ENCODE measurements at regions of chr17 and their contacts with region 1.

Region 1: DNA sequence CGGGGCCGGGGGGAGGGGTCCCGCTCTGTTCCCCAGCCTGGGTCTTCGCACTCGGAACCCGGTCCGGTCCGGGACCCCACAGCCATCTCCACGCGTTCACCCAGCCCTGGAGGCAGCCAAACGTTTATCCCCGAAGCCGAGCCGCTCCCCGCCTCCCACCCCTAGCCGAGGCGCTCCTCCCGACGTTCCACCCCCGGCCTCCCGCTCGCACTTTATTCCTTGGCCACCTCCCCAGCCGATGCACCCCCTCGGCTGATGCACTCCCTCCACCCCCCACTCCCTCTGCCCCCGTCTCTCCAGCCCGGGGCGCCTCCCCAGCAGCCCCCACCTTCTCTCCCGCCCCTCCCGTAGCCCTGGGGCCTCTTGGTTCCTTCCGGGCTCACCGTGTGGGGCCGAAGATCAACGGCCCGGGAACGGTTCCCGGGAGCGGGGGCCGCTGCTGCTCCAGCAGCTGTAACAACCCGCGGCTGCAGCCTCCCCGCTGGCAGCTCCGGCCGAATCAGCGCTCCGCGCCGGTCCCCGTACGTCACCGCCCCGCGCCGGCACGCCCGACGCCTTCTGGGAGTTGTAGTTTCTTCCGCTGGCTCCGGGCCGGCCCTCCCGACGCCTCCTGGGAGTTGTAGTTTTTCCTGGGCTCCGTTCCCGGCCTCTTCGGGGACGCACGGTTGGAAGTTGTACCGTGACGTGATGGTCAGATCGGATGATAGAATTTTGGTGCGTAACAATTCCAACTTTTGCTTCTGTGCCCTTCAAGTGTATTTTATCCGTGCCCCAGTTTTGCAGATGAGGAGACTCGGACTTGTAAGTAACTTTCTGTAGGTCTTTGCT is at the starts of genes LRRC3C and ORMDL3:
- DNase-seq: peak; percentile 87 to 93
- ATAC-seq: peak; percentile 85 to 90
- H3K4me3 ChIP-seq: peak within 1 kb of the TSS; percentile 79
- H3K27ac ChIP-seq: peak within 1 kb of the TSS; percentile 79 to 93
- H3K4me1 ChIP-seq: peaks cover 41% of the 10 kb centered on the region
- CTCF ChIP-seq: no peak
- EP300 ChIP-seq: no peak
- POLR2A ChIP-seq: peak; percentile 80
- RAD21 ChIP-seq: no peak
- polyA plus RNA-seq, gene LRRC3C: not detected in 2 replicates
- polyA plus RNA-seq, gene ORMDL3: 26.9 and 49.0 TPM in 2 replicates

Region 2: GRCh38 chr17:39952680-39953470 is 25.6 kb after region 1 on chr17:
- CTCF ChIA-PET with region 1: interaction called, 11 read pairs
- POLR2A ChIA-PET with region 1: interaction called, 8 read pairs
- DNase-seq: peak; percentile 97 to 98
- ATAC-seq: peak; percentile 87 to 97
- H3K4me3 ChIP-seq: peak overlapping the region; percentile 42
- H3K27ac ChIP-seq: peak overlapping the region; percentile 66 to 88
- H3K4me1 ChIP-seq: peaks cover 10% of the 10 kb centered on the region
- CTCF ChIP-seq: no peak
- EP300 ChIP-seq: no peak
- POLR2A ChIP-seq: peak; percentile 74
- RAD21 ChIP-seq: no peak